Ascending aorta (tissue), 2 donors: ENCODE measurements at regions of chr12 and their contacts with region 1.

Region 1: DNA sequence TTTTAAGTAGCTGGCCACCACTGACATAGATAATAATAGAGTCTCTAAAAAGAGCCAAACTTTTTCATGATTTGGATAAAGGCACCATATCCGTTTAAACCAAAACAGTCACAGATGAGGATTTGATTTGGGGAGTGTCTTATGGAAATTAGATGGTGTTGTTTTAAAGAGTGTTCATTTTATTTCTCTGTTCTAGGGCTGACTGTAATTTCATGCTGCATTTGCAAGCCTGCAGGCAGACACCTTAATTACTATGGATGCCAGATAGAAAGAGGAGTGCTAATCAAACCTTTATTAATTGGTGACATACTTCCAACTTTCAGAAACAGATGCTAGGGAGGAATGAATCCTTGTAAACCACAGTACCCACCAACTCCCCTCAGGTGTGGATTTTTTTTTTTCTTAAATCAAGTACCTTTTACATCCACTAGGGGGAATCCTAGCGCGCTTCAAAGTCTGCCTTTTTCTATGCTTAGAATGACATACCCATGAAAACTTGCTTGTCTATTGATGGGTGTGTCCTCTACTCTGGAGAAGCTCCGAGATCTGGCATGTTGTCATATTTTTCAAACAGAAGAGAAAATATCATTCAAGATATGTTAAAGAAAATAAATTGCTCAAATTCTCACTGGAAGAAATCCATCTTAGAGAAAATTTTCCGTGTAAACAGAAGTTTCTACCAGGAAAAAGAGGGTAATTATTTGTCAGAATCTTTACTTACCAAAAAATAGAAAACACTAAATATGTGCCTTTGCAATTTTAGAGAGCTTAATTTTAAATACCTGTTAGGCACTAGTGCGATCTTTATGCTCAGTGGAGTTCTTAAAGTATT is 14.2 kb upstream of the PLXNC1 start:
- DNase-seq: no peak
- H3K4me3 ChIP-seq: no peak overlapping the region
- H3K27ac ChIP-seq: no peak overlapping the region
- H3K4me1 ChIP-seq: no peaks in the 10 kb centered on the region
- H3K27me3 ChIP-seq: no peaks in the 10 kb centered on the region
- CTCF ChIP-seq: peak; percentile 34 to 78 (median 73)

Region 2: GRCh38 chr12:93868771-93869170 is 265.4 kb before region 1 on chr12:
- intact Hi-C with region 1: no loop called
- DNase-seq: no peak
- H3K4me3 ChIP-seq: no peak overlapping the region
- H3K27ac ChIP-seq: no peak overlapping the region
- H3K4me1 ChIP-seq: peaks cover 0 to 3% of the 10 kb centered on the region in 2 donors
- H3K27me3 ChIP-seq: no peaks in the 10 kb centered on the region
- CTCF ChIP-seq: no peak

Region 3: GRCh38 chr12:94532490-94533422 is 398.6 kb after region 1 on chr12:
- intact Hi-C with region 1: loop called (anchors 2 kb)
- DNase-seq: peak; percentile 12 to 71
- H3K4me3 ChIP-seq: no peak overlapping the region
- H3K27ac ChIP-seq: no peak overlapping the region
- H3K4me1 ChIP-seq: no peaks in the 10 kb centered on the region
- H3K27me3 ChIP-seq: no peaks in the 10 kb centered on the region
- CTCF ChIP-seq: peak; percentile 66 to 73 (median 70)